ENCODE measurements at regions of chr7 and their contacts with region 1.

Region 1: DNA sequence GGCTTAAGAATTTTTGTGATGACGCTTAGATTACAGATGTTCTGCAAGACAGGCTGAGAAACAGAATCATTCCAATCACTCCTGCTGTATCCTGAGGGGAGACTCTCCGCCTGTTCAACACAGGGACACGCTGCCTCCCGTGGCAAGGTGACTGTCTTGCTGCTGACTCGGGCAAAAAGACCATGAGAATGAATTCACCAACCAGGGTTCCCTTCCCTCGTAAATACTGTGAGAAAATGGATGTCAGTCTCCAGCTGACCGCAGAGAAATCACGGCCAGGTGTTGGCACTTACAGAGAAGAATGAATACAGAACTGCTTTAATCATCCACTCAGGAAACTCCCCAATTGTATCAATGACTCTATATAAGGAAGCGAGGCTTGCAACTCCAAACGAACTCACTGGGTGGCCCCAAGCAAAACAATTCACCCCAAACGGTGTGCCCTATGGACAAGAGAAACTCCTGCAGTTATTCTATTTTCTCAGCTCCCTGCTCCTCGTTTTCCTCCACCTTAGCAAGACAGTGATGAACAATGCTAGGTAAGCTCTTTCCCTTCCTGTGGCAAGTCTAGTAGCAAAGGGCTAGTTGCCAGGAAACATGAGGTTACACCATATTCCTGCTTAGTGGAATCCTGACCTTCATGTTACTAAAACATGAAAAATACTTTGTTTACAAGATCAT is 22.8 kb downstream of the GNA12 start:
- DNase-seq: peak; percentile 43

Region 2: GRCh38 chr7:2941216-2941859 is 120.0 kb after region 1 on chr7:
- in situ Hi-C with region 1: loop called (anchors 10 kb)
- DNase-seq: no peak